SK-N-SH (cell line): ENCODE measurements at regions of chr21 and their contacts with region 1.

Region 1: DNA sequence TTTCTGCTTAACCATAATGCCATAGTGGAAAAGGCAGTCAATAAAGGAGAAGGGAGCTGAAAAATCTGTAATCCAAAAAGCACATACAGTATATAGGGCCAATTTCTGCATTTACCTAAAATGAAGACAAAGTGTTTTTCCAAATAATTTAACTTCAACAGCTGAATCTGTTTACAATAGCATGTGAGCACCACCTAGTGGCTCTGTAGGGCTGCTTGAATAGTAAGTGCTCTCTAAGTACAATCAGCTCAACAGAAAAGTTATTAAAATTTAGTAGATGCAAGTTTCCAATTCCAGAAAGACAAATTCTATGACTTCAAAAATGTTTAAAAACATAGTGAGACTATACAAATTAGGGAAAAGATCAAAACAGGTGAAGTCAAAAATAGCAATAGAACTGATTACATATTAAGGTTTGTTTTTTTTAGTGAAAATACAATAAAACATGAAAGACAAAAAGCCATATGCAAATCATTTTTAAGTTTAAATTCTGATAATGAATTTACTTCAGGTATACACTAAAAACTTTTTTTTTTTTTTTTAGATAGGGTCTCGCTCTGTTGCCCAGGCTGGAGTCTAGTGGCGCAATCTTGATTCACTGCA is 220.0 kb downstream of the SETD4 start:
- DNase-seq: peak; percentile 38
- H3K4me3 ChIP-seq: no peak overlapping the region
- H3K27ac ChIP-seq: no peak overlapping the region
- H3K4me1 ChIP-seq: no peaks in the 10 kb centered on the region
- H3K27me3 ChIP-seq: no peaks in the 10 kb centered on the region
- CTCF ChIP-seq: peak; percentile 98
- EP300 ChIP-seq: no peak
- RAD21 ChIP-seq: peak; percentile 91

Region 2: GRCh38 chr21:34693192-34693810 is 1147.0 kb before region 1 on chr21:
- CTCF ChIA-PET with region 1: interaction called, 89 read pairs
- POLR2A ChIA-PET with region 1: no interaction called
- DNase-seq: peak; percentile 63
- H3K4me3 ChIP-seq: no peak overlapping the region; a peak in 1 of 4 replicates
- H3K27ac ChIP-seq: no peak overlapping the region
- H3K4me1 ChIP-seq: no peaks in the 10 kb centered on the region; a peak in 1 of 4 replicates
- H3K27me3 ChIP-seq: peaks cover 38% of the 10 kb centered on the region; the same call in 1 of the 2 replicates
- CTCF ChIP-seq: peak; percentile 87
- EP300 ChIP-seq: no peak
- RAD21 ChIP-seq: peak; percentile 80

Region 3: GRCh38 chr21:35829067-35829466 is 11.2 kb before region 1 on chr21:
- CTCF ChIA-PET with region 1: interaction called, 18 read pairs
- POLR2A ChIA-PET with region 1: no interaction called
- DNase-seq: no peak
- H3K4me3 ChIP-seq: no peak overlapping the region
- H3K27ac ChIP-seq: no peak overlapping the region
- H3K4me1 ChIP-seq: no peaks in the 10 kb centered on the region
- H3K27me3 ChIP-seq: no peaks in the 10 kb centered on the region
- CTCF ChIP-seq: no peak
- EP300 ChIP-seq: no peak
- RAD21 ChIP-seq: no peak

Region 4: GRCh38 chr21:35924714-35925301 is 84.5 kb after region 1 on chr21:
- CTCF ChIA-PET with region 1: interaction called, 13 read pairs
- POLR2A ChIA-PET with region 1: no interaction called
- DNase-seq: no peak
- H3K4me3 ChIP-seq: no peak overlapping the region
- H3K27ac ChIP-seq: peak overlapping the region in 1 of 2 experiments; percentile 53; a peak in 1 of 4 replicates
- H3K4me1 ChIP-seq: no peaks in the 10 kb centered on the region
- H3K27me3 ChIP-seq: no peaks in the 10 kb centered on the region
- CTCF ChIP-seq: no peak
- EP300 ChIP-seq: no peak
- RAD21 ChIP-seq: no peak

Region 5: GRCh38 chr21:35948982-35949381 is 108.7 kb after region 1 on chr21:
- CTCF ChIA-PET with region 1: interaction called, 10 read pairs
- POLR2A ChIA-PET with region 1: no interaction called
- DNase-seq: no peak
- H3K4me3 ChIP-seq: no peak overlapping the region
- H3K27ac ChIP-seq: no peak overlapping the region
- H3K4me1 ChIP-seq: no peaks in the 10 kb centered on the region
- H3K27me3 ChIP-seq: no peaks in the 10 kb centered on the region; the same call in 1 of the 2 replicates
- CTCF ChIP-seq: no peak
- EP300 ChIP-seq: no peak
- RAD21 ChIP-seq: no peak

Region 6: GRCh38 chr21:36028127-36029069 is 188.1 kb after region 1 on chr21:
- CTCF ChIA-PET with region 1: interaction called, 35 read pairs
- POLR2A ChIA-PET with region 1: no interaction called
- DNase-seq: peak; percentile 83
- H3K4me3 ChIP-seq: no peak overlapping the region; a peak in 1 of 4 replicates
- H3K27ac ChIP-seq: no peak overlapping the region
- H3K4me1 ChIP-seq: peaks cover 0 to 4% of the 10 kb centered on the region in 2 experiments; a peak in 1 of 4 replicates
- H3K27me3 ChIP-seq: no peaks in the 10 kb centered on the region
- CTCF ChIP-seq: peak; percentile 93
- EP300 ChIP-seq: no peak
- RAD21 ChIP-seq: peak; percentile 98